ENCODE measurements at regions of chr18 and their contacts with region 1.

Region 1: GRCh38 chr18:40346146-40346545 is 1608.9 kb upstream of the PIK3C3 start:
- DNase-seq: no peak
- H3K4me3 Mint-ChIP-seq: no peak overlapping the region
- H3K27ac Mint-ChIP-seq: no peak overlapping the region
- H3K4me1 Mint-ChIP-seq: no peaks in the 10 kb centered on the region
- H3K27me3 Mint-ChIP-seq: no peaks in the 10 kb centered on the region
- CTCF ChIP-seq: no peak

Region 2: DNA sequence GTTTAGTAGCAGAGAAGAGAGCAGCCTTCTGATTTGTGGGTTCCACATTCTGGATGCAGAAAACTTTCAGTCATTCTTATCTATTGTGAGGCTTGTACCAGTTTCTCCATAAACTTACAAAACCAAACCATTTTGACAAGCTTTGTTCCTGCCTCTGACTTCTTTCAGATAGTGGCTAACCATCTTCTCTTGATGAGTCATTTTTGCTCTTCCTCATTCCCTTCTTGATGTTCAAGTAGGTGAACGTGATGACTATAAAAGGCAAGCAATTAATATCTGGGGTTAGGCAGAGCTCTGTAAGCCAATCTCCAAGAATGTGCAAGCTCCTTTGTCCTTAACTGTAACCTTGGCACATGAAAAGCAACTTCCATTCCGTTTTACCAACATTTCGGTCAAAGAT is 474.2 kb before region 1 on chr18:
- CTCF ChIA-PET with region 1: interaction called, 15 read pairs
- intact Hi-C with region 1: no loop called
- DNase-seq: no peak
- H3K4me3 Mint-ChIP-seq: no peak overlapping the region
- H3K27ac Mint-ChIP-seq: no peak overlapping the region
- H3K4me1 Mint-ChIP-seq: no peaks in the 10 kb centered on the region
- H3K27me3 Mint-ChIP-seq: no peaks in the 10 kb centered on the region
- CTCF ChIP-seq: no peak

Region 3: GRCh38 chr18:39969803-39970494 is 376.2 kb before region 1 on chr18:
- CTCF ChIA-PET with region 1: no interaction called
- intact Hi-C with region 1: no loop called
- DNase-seq: no peak
- H3K4me3 Mint-ChIP-seq: no peak overlapping the region
- H3K27ac Mint-ChIP-seq: no peak overlapping the region
- H3K4me1 Mint-ChIP-seq: no peaks in the 10 kb centered on the region
- H3K27me3 Mint-ChIP-seq: no peaks in the 10 kb centered on the region
- CTCF ChIP-seq: no peak

Region 4: DNA sequence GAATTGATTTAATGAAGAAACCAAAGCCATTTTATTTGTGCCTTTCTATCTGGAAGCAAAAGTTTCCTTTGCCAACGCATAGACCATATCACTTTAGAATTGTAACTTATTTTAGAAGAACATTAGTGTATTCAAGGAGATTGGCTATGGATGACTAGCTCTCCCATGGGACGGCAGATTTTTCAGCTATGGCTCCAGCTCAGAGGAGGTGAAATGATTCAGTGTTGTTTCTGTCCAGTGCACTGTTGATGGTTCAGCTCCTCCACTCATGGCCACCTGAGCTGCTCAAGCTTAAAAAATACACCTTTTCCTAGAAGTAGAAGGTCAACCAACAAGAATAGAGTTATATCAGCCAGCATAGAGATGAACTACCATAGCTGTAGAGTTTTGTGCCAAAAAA is 11.4 kb after region 1 on chr18:
- CTCF ChIA-PET with region 1: no interaction called
- intact Hi-C with region 1: no loop called
- DNase-seq: no peak
- H3K4me3 Mint-ChIP-seq: no peak overlapping the region
- H3K27ac Mint-ChIP-seq: no peak overlapping the region
- H3K4me1 Mint-ChIP-seq: no peaks in the 10 kb centered on the region
- H3K27me3 Mint-ChIP-seq: peaks cover 20% of the 10 kb centered on the region
- CTCF ChIP-seq: no peak